Vagina (tissue), 2 donors: ENCODE measurements at regions of chr22 and their contacts with region 1.

Region 1: DNA sequence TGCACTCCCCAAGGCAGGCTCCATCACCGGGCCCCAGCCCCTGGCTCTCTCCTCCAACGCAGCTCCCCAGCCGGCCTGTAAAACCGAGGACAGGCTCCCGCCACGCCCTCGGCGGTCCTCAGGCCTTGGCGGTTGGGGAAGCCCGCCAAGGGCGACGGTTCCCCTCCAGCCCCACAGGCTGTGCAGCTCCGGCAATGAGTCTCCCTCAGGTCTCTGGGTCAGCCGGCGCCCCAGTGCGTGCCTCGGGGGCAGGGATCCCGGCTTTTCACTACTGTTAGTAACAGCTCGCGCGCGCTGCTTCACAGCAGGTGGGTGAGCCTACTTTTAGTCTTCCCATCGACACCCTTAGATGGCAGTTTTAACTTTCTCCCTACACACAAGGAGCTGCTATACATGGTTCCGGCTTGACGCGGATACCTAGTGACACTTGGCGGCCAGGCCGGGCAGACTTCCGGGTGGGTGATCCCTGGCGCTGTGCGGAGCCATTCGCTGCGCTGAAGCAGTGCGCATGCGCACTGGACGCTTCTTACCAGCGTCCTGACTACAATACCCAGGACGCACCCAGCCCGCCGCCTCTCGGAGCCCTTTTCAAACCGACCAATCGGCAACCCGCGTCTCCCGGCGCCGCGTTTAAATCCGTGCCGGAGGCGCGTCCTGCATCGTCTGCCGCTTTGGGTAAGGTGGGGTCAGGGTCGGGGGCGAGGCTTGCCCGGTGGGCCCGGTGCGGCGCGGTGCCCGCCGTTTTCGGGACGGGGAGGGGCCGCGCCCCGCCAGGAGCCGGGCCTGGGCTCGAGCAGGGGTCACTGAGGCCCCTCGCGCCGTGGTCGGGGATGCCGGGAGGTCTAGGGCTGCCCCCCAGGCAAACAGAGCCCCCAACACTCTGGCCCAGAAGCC is at the start of gene GTSE1:
- DNase-seq: peak in 1 of 2 donors; percentile 95
- H3K4me3 ChIP-seq: peak within 1 kb of the TSS; percentile 60 to 66
- H3K27ac ChIP-seq: peak within 1 kb of the TSS; percentile 93
- H3K4me1 ChIP-seq: peaks cover 20% of the 10 kb centered on the region
- H3K27me3 ChIP-seq: no peaks in the 10 kb centered on the region
- CTCF ChIP-seq: peak in 1 of 3 experiments; percentile 24
- POLR2A ChIP-seq: no peak
- total RNA-seq, gene GTSE1: 2.2 TPM

Region 2: GRCh38 chr22:45994491-45995404 is 301.8 kb before region 1 on chr22:
- intact Hi-C with region 1: loop called (anchors 10 kb)
- DNase-seq: no peak
- H3K4me3 ChIP-seq: no peak overlapping the region
- H3K27ac ChIP-seq: no peak overlapping the region
- H3K4me1 ChIP-seq: peaks cover 41% of the 10 kb centered on the region
- H3K27me3 ChIP-seq: no peaks in the 10 kb centered on the region
- CTCF ChIP-seq: peak; percentile 93 to 98 (median 97)
- POLR2A ChIP-seq: no peak

Region 3: DNA sequence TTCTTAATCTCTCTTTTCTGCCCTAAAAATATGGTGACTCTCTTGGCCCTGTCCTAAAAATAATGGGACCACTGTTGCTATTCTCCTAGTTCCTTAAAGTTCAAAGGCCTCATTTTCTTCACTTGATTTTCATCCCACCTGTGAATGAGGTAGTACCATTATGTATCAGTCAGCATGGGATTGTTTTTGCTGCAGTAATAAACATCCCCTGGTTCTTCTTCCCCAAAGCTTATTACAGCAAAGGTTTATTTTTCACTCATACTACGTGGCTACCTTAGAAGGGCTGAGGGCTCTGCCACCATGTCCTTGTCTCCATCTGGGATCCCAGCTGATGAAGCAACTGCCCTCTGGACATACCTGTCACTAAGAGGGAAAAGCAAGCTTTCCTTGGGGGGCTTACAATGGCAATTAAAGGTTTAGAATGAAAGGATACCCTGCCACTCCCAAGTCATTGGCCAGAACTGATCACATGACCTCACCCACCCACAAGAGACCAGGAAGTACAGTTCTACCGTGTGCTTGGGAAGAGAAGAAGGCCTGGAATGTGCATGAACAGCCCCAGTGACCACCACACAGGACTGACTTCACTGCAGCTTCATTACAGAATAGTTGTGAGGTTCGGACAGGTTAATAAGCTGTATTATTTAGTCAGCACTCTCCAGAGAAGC is 20.9 kb before region 1 on chr22:
- intact Hi-C with region 1: no loop called
- DNase-seq: no peak
- H3K4me3 ChIP-seq: no peak overlapping the region
- H3K27ac ChIP-seq: no peak overlapping the region
- H3K4me1 ChIP-seq: no peaks in the 10 kb centered on the region
- H3K27me3 ChIP-seq: no peaks in the 10 kb centered on the region
- CTCF ChIP-seq: no peak
- POLR2A ChIP-seq: no peak